CD4-positive, alpha-beta memory T cell (primary cell): ENCODE measurements at regions of chr11 and their contacts with region 1.

Region 1: DNA sequence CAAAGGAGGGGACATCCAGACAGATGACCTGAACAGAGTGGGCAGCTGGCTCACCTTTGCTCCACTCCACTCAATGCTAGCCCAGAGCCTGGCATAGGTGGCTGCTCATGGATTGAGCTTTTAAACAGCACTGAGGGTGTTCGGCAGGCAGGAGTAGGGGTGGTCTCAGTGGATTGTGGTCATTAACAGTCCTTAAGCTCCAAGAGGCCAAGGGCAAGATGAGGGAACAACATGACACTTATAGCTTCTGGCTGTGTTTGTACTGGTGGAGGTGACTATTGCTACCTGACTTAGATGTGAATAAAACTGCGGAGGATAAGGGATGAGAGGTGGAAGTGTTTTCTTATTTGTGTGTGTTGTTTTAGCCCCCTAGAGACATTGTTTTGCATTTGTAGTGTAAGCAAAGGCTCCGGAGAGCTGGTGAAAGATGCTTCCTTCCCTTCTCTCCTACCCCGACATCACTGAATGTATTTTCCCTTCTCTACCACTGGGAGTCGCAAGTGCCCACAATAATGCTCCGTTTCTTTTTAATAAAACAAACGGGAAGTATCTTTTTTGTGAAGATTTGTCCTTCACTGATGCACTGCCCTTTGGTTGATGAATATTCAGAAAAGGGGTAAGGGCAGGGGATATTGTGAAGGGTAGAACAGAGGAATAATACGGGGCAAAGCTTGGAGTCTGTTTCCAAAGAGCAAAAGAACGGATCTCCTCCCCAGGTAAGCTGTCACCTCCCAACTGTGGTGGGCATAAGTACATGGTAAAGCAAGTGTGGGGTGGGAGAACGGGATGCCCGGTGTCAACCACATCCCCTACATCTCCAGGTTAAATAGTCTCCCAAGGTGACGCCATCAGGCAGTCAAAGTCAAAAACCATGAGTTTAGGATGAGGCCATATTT is 27.5 kb upstream of the MTNR1B start:
- DNase-seq: peak in 4 of 5 donors; percentile 6 to 16 (median 10)
- H3K4me3 ChIP-seq: no peak overlapping the region
- H3K4me3 Mint-ChIP-seq: no peak overlapping the region
- H3K27ac ChIP-seq: no peak overlapping the region
- H3K27ac Mint-ChIP-seq: no peak overlapping the region
- H3K4me1 ChIP-seq: no peaks in the 10 kb centered on the region
- H3K4me1 Mint-ChIP-seq: no peaks in the 10 kb centered on the region
- H3K27me3 ChIP-seq: no peaks in the 10 kb centered on the region
- H3K27me3 Mint-ChIP-seq: peaks cover 7 to 10% of the 10 kb centered on the region in 2 donors

Region 2: GRCh38 chr11:93049740-93050139 is 107.8 kb after region 1 on chr11:
- CTCF ChIA-PET with region 1: no interaction called
- POLR2A ChIA-PET with region 1: no interaction called
- intact Hi-C with region 1: no loop called
- DNase-seq: no peak
- H3K4me3 ChIP-seq: no peak overlapping the region
- H3K4me3 Mint-ChIP-seq: no peak overlapping the region
- H3K27ac ChIP-seq: no peak overlapping the region
- H3K27ac Mint-ChIP-seq: no peak overlapping the region
- H3K4me1 ChIP-seq: no peaks in the 10 kb centered on the region
- H3K4me1 Mint-ChIP-seq: no peaks in the 10 kb centered on the region
- H3K27me3 ChIP-seq: no peaks in the 10 kb centered on the region
- H3K27me3 Mint-ChIP-seq: peaks cover 0 to 2% of the 10 kb centered on the region in 2 donors

Region 3: GRCh38 chr11:93225662-93226061 is 283.7 kb after region 1 on chr11:
- CTCF ChIA-PET with region 1: interaction called, 26 read pairs
- POLR2A ChIA-PET with region 1: no interaction called
- intact Hi-C with region 1: no loop called
- DNase-seq: peak in 4 of 5 donors; percentile 14 to 23 (median 14)
- H3K4me3 ChIP-seq: no peak overlapping the region
- H3K4me3 Mint-ChIP-seq: no peak overlapping the region
- H3K27ac ChIP-seq: no peak overlapping the region
- H3K27ac Mint-ChIP-seq: no peak overlapping the region
- H3K4me1 ChIP-seq: no peaks in the 10 kb centered on the region
- H3K4me1 Mint-ChIP-seq: no peaks in the 10 kb centered on the region
- H3K27me3 ChIP-seq: no peaks in the 10 kb centered on the region
- H3K27me3 Mint-ChIP-seq: peaks cover 0 to 3% of the 10 kb centered on the region in 2 donors